Activated T-helper 1 cell treated with anti-CD3 and anti-CD28 coated beads, Interleukin-12 subunit alpha, Interleukin-12 subunit beta, Interleukin-2, Interleukin-4 antibody, amounts not matched to agents 30 ng/mL and 10 ng/mL and 1 ng/mL, durations not matched to agents 14 hours and 24 hours and 36 hours (primary cell): ENCODE measurements at regions of chr14 and their contacts with region 1.

Region 1: DNA sequence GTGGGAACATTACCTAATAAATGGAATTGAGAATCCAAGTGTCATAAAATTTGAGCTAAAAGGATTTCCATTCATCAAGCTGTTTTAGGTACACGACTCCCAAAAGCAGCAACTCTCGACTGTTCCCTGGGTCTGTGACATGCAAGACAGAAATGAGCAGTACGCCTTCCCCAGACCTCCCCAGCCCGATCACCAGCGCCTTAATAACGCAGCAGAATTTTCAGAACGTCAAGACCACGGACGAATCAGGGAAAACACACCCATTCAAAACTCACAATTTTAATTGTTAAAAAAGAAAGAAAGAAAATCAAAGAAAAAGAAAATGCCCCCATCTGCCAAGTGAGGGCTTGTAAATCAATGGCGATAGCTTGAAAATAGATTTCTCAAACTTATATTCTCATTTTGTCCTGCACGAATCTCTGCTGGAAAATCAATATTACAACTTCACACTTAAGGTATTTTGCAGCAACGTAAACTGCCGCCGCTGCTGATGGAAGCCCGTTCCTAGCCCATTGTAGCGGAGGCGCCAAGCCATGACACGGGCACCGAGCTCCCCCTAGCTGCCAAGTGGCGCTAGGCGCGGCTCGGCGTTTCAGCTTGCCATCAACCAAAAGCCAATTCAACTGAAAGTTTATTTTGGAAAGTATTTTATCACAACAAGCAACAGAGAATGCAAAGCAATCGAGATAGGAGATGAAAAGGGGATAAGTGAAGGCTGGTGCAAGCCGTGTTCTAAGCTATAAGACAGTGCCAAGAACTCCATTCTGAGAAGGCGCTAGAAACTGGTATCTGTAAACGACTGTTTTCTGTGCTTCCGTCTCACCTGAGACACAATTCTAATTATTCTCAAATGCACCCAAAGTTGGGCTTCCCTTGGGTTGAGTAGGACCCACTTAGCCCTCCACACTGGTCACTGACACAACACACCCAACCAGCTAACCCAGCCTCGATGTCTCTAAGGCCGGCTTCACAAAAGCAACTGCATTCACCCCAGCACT is 5.5 kb downstream of the BCL11B start:
- DNase-seq: peak; percentile 82
- H3K4me3 Mint-ChIP-seq: peak overlapping the region; percentile 99
- H3K27ac Mint-ChIP-seq: peak overlapping the region; percentile 100
- H3K4me1 Mint-ChIP-seq: peaks cover 72% of the 10 kb centered on the region
- H3K27me3 Mint-ChIP-seq: no peaks in the 10 kb centered on the region

Region 2: GRCh38 chr14:97788364-97788763 is 1478.1 kb before region 1 on chr14:
- intact Hi-C with region 1: loop called (anchors 10 kb)
- DNase-seq: no peak
- H3K4me3 Mint-ChIP-seq: no peak overlapping the region
- H3K27ac Mint-ChIP-seq: no peak overlapping the region
- H3K4me1 Mint-ChIP-seq: peaks cover 25% of the 10 kb centered on the region
- H3K27me3 Mint-ChIP-seq: no peaks in the 10 kb centered on the region

Region 3: DNA sequence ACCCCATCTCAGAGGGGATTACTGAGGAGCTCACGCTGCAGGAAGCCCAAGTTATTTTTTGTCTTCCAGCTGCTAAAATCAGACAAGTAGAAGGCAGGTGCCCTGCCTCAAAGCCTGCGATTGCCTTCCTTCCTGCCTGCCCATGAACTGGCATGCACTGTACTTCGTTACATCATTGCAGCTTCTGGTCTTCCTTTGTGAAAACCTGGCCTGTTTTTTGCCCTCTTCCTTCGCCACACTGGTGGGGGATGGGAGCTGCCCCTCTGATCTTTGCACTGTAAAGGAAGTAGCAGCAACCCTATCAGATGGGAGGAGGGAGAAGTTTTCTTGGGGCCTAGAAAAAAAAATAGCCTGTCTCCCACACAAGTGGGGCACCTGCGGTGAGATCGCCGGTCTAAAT is 1093.2 kb before region 1 on chr14:
- intact Hi-C with region 1: loop called (anchors 2 kb)
- DNase-seq: peak; percentile 45
- H3K4me3 Mint-ChIP-seq: peak overlapping the region; percentile 73
- H3K27ac Mint-ChIP-seq: peak overlapping the region; percentile 90
- H3K4me1 Mint-ChIP-seq: peaks cover 97% of the 10 kb centered on the region
- H3K27me3 Mint-ChIP-seq: no peaks in the 10 kb centered on the region

Region 4: GRCh38 chr14:98931911-98932310 is 334.6 kb before region 1 on chr14:
- intact Hi-C with region 1: loop called (anchors 5 kb)
- DNase-seq: peak; percentile 61
- H3K4me3 Mint-ChIP-seq: peak overlapping the region; percentile 55
- H3K27ac Mint-ChIP-seq: peak overlapping the region; percentile 81
- H3K4me1 Mint-ChIP-seq: peaks cover 54% of the 10 kb centered on the region
- H3K27me3 Mint-ChIP-seq: no peaks in the 10 kb centered on the region

Region 5: DNA sequence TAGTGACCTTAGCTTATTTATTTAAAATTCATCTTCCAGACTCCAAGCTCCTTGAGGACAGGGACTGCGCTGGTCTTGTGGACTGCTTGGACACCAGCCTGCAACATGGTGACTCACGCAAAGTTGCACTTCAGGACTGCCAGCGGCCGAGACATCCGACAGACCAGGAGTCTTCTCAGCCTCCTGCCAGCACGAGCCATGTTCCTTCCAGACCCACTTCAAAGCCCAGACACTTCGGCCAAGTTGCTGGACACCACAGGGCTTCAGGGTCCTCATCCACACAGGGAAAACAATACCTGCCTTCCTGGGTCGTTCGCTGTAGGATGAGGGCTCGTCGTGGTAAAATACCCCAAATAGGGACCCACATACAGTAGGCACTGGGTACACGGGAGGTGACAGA is 83.2 kb before region 1 on chr14:
- intact Hi-C with region 1: no loop called
- DNase-seq: no peak
- H3K4me3 Mint-ChIP-seq: no peak overlapping the region
- H3K27ac Mint-ChIP-seq: peak overlapping the region; percentile 83
- H3K4me1 Mint-ChIP-seq: peaks cover 98% of the 10 kb centered on the region
- H3K27me3 Mint-ChIP-seq: no peaks in the 10 kb centered on the region

Region 6: GRCh38 chr14:99230208-99231151 is 36.0 kb before region 1 on chr14:
- intact Hi-C with region 1: loop called (anchors 1 kb)
- DNase-seq: peak; percentile 82
- H3K4me3 Mint-ChIP-seq: peak overlapping the region; percentile 78
- H3K27ac Mint-ChIP-seq: peak overlapping the region; percentile 98
- H3K4me1 Mint-ChIP-seq: peaks cover 89% of the 10 kb centered on the region
- H3K27me3 Mint-ChIP-seq: no peaks in the 10 kb centered on the region